Naive thymus-derived CD8-positive, alpha-beta T cell (primary cell): ENCODE measurements at regions of chr7 and their contacts with region 1.

Region 1: DNA sequence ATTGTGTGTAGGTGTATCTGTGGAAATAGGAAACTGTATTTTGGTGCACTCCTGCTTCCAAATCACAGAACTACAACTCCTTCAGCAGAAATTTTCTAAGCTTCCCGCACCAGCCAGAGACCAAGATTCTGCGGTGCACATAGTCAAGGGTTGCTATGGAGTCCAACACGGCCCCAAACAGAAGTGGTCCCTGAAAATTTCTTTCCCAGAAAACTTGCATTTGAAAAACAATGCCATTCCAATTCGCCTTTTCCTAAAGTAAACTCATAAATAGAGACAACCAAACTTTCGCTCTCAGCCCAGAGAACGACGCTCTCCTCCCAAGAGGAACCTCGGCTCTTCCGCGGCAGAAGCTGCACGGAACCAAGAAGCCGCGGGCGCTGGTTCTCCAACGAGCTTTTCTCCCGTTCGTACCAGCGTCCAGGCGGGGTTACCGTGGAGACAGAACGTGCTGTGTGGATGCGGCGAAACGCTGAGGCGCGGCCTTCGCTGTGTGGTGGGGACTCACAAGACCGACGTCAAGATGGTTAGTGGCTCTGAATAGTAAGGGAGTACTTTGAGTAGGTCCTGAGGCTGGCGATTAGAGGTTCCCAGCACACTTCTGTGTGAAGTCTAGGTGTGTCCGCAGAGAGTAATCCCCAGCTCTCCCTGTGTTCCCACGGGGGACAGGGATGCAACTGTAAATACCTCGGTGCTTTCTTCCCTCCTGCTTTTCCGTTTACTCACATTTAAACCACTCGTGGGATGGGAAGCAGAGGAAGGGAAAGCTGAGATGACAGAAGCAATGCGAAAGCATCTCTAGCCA is 24.0 kb upstream of the ZC3HAV1 start:
- DNase-seq: peak; percentile 69 to 92 (median 87)
- ATAC-seq: peak; percentile 98 to 99
- H3K4me3 Mint-ChIP-seq: peak overlapping the region; percentile 86 to 95 (median 92)
- H3K27ac Mint-ChIP-seq: peak overlapping the region; percentile 83 to 95 (median 93)
- H3K4me1 Mint-ChIP-seq: peaks cover 6 to 17% (median 15%) of the 10 kb centered on the region in 4 donors
- H3K27me3 Mint-ChIP-seq: no peaks in the 10 kb centered on the region

Region 2: GRCh38 chr7:138981332-138982203 is 152.0 kb before region 1 on chr7 and contains the start of gene KIAA1549:
- POLR2A ChIA-PET with region 1: no interaction called
- DNase-seq: peak in 9 of 10 donors; percentile 13 to 45 (median 33)
- ATAC-seq: peak; percentile 74 to 81
- H3K4me3 Mint-ChIP-seq: peak within 1 kb of the TSS; percentile 87 to 94 (median 91)
- H3K27ac Mint-ChIP-seq: peak within 1 kb of the TSS in 9 of 10 donors; percentile 42 to 91 (median 71)
- H3K4me1 Mint-ChIP-seq: peaks cover 13 to 21% (median 14%) of the 10 kb centered on the region in 4 donors
- H3K27me3 Mint-ChIP-seq: peaks cover 16 to 46% (median 24%) of the 10 kb centered on the region in 5 donors
- polyA plus RNA-seq, gene KIAA1549: not detected

Region 3: GRCh38 chr7:139109188-139109982 is 24.2 kb before region 1 on chr7 and contains the start of gene ZC3HAV1:
- POLR2A ChIA-PET with region 1: interaction called, 10 read pairs
- DNase-seq: peak; percentile 74 to 96 (median 90)
- ATAC-seq: peak; percentile 85 to 92
- H3K4me3 Mint-ChIP-seq: peak within 1 kb of the TSS; percentile 95 to 100 (median 98)
- H3K27ac Mint-ChIP-seq: peak within 1 kb of the TSS; percentile 95 to 99 (median 99)
- H3K4me1 Mint-ChIP-seq: peaks cover 18 to 50% (median 45%) of the 10 kb centered on the region in 4 donors
- H3K27me3 Mint-ChIP-seq: no peaks in the 10 kb centered on the region
- polyA plus RNA-seq, gene ZC3HAV1: 144 to 188 (median 162) TPM